Naive thymus-derived CD4-positive, alpha-beta T cell (primary cell): ENCODE measurements at regions of chr11 and their contacts with region 1.

Region 1: DNA sequence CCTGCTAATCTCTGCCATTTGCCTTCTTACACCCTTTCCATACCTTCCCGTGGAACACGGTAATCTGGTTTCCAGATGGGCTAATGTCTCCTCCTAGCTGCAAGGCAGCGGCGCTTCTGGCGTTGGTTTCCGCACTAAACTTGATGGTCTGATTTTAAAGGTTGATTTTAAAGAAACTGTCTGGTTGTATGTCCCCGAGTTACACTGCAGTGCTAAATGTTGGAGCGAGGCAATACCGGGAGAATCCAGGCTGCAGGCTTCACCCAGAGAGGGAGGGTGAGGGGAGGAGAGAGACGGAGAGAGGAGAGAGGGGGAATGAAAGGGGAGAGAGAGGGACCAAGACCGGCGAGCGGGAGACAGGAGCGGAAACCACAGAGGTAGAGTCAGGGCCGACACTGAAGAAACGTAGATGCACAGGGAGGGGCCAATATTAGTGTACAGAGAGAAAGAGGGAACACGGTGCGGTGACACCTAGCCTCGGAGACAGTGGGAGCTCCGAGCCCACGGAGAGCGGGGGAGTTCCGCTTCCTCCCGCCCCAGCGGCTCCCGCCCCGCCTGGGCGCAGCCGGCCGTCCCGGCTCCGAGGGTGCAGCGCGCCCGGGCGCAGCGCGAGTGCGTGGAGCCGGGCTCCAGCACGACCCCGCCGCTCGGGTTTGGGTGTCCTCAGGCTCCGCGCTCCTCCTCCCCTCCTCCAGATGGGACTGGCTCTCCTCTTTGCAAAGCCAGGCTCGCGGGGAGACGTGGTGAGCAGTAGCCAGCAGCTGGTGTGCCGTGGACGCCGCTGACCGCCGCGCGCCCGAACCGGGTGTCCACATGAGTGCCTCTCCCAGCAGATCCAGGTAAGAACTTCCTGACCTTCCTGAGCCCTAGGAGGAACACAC is 71.9 kb upstream of the GRAMD1B start:
- DNase-seq: peak in 1 of 9 donors; percentile 64
- ATAC-seq: peak; percentile 59
- H3K4me3 ChIP-seq: peak overlapping the region; percentile 56
- H3K4me3 Mint-ChIP-seq: peak overlapping the region; percentile 4 to 98 (median 72)
- H3K27ac ChIP-seq: no peak overlapping the region
- H3K27ac Mint-ChIP-seq: peak overlapping the region in 1 of 9 donors; percentile 92
- H3K4me1 ChIP-seq: peaks cover 0 to 16% of the 10 kb centered on the region in 2 donors
- H3K4me1 Mint-ChIP-seq: peaks cover 8 to 61% (median 15%) of the 10 kb centered on the region in 7 donors
- H3K27me3 ChIP-seq: peaks cover 0 to 2% of the 10 kb centered on the region in 2 donors
- H3K27me3 Mint-ChIP-seq: peaks cover 0 to 55% (median 46%) of the 10 kb centered on the region in 5 donors

Region 2: DNA sequence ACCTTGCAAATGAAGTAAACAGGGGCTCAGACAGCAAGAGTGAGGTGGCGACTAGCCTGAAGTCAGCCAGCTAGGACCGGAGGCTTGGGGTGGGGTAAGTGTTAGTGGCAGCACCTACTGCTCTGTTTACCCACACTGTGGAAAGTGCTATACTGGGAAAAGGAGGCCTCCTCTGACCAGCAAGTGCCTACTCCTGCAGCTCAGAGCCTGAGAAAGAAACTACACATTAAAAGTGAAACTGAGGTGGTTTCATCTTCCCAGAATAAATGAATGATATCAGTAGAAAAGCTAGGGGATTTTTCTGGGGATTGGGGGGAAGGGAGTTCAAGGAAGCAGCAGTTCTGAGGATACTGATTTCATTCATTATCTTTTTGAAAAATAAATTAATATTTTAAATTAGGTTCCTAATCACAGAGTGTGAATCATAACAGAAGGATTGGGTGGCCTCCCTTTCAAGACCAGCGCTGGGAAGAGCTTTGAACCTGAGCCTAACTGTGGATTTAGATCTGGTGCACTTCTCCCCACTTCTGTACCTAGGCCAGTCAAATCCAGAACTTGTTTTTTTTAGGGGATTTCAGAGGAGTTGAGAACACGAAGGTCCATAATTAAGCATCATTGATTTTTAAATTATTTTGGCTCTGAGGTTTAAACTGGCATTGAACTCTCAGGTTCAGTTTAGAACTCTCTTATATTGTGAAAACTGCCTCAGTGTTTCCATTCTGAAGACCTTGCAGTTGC is 23.8 kb after region 1 on chr11:
- CTCF ChIA-PET with region 1: no interaction called
- POLR2A ChIA-PET with region 1: no interaction called
- intact Hi-C with region 1: loop called in 1 of 2 experiments (anchors 1 kb)
- DNase-seq: peak in 1 of 9 donors; percentile 65
- ATAC-seq: peak; percentile 45
- H3K4me3 ChIP-seq: no peak overlapping the region
- H3K4me3 Mint-ChIP-seq: peak overlapping the region in 1 of 10 donors; percentile 77
- H3K27ac ChIP-seq: no peak overlapping the region
- H3K27ac Mint-ChIP-seq: peak overlapping the region in 1 of 9 donors; percentile 86
- H3K4me1 ChIP-seq: peaks cover 0 to 6% of the 10 kb centered on the region in 2 donors
- H3K4me1 Mint-ChIP-seq: peaks cover 0 to 48% (median 3%) of the 10 kb centered on the region in 7 donors
- H3K27me3 ChIP-seq: peaks cover 0 to 3% of the 10 kb centered on the region in 2 donors
- H3K27me3 Mint-ChIP-seq: no peaks in the 10 kb centered on the region

Region 3: GRCh38 chr11:123478352-123478987 is 120.3 kb after region 1 on chr11:
- CTCF ChIA-PET with region 1: interaction called, 5 read pairs
- POLR2A ChIA-PET with region 1: no interaction called
- intact Hi-C with region 1: loop called in 1 of 2 experiments (anchors 2 kb)
- DNase-seq: peak in 7 of 9 donors; percentile 27 to 61 (median 50)
- ATAC-seq: peak; percentile 64
- H3K4me3 ChIP-seq: no peak overlapping the region
- H3K4me3 Mint-ChIP-seq: peak overlapping the region in 1 of 10 donors; percentile 39
- H3K27ac ChIP-seq: no peak overlapping the region
- H3K27ac Mint-ChIP-seq: peak overlapping the region in 1 of 9 donors; percentile 30
- H3K4me1 ChIP-seq: no peaks in the 10 kb centered on the region
- H3K4me1 Mint-ChIP-seq: peaks cover 0 to 59% (median 5%) of the 10 kb centered on the region in 7 donors
- H3K27me3 ChIP-seq: no peaks in the 10 kb centered on the region
- H3K27me3 Mint-ChIP-seq: no peaks in the 10 kb centered on the region

Region 4: DNA sequence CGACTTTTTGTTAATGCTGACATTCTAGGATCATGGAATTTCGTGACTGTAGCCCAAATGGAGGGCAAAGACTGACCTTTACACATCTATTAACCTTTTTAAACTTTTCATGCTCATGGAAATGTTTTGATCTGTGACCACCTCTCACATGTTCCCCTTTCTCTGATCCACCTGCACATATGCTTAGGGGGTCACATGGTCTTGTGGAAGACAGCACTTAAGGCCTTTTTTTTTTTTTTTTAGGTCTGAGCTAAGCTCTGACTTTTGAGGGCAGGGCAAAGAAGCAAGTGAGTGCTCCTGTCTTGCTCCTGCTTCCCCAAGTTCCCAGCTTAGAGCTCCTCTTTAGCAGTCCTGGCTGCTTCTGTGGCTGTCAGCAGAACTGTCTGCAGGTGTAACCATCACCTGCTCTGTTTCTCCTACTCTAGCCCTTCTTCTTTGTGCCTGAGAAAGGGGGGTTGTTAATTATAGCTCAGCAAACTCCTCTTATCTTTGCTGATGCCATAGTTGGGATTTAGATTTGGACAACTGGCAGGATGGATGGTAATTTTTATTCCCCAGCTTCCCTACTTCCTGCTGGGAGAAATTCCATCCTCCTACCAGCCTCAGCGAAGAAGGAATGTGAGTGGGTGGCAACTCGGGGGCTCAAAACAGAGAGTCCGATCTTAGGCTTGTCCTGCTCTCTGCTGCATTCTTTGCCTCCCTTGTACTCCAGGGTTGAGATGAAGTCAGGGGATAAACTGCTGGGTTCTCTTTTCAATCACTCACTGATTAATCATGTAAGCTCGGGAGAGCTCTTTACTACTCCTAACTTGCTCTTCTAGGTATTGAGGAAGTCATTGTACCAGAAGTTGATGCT is 136.2 kb after region 1 on chr11:
- CTCF ChIA-PET with region 1: no interaction called
- POLR2A ChIA-PET with region 1: no interaction called
- intact Hi-C with region 1: no loop called
- DNase-seq: no peak
- ATAC-seq: no peak
- H3K4me3 ChIP-seq: no peak overlapping the region
- H3K4me3 Mint-ChIP-seq: no peak overlapping the region
- H3K27ac ChIP-seq: no peak overlapping the region
- H3K27ac Mint-ChIP-seq: peak overlapping the region in 1 of 9 donors; percentile 11
- H3K4me1 ChIP-seq: no peaks in the 10 kb centered on the region
- H3K4me1 Mint-ChIP-seq: peaks cover 0 to 41% (median 3%) of the 10 kb centered on the region in 7 donors
- H3K27me3 ChIP-seq: no peaks in the 10 kb centered on the region
- H3K27me3 Mint-ChIP-seq: no peaks in the 10 kb centered on the region

Region 5: GRCh38 chr11:123536690-123537437 is 178.7 kb after region 1 on chr11:
- CTCF ChIA-PET with region 1: no interaction called
- POLR2A ChIA-PET with region 1: no interaction called
- intact Hi-C with region 1: no loop called
- DNase-seq: no peak
- ATAC-seq: no peak
- H3K4me3 ChIP-seq: no peak overlapping the region
- H3K4me3 Mint-ChIP-seq: no peak overlapping the region
- H3K27ac ChIP-seq: no peak overlapping the region
- H3K27ac Mint-ChIP-seq: no peak overlapping the region
- H3K4me1 ChIP-seq: no peaks in the 10 kb centered on the region
- H3K4me1 Mint-ChIP-seq: peaks cover 0 to 37% (median 0%) of the 10 kb centered on the region in 7 donors
- H3K27me3 ChIP-seq: no peaks in the 10 kb centered on the region
- H3K27me3 Mint-ChIP-seq: no peaks in the 10 kb centered on the region

Region 6: DNA sequence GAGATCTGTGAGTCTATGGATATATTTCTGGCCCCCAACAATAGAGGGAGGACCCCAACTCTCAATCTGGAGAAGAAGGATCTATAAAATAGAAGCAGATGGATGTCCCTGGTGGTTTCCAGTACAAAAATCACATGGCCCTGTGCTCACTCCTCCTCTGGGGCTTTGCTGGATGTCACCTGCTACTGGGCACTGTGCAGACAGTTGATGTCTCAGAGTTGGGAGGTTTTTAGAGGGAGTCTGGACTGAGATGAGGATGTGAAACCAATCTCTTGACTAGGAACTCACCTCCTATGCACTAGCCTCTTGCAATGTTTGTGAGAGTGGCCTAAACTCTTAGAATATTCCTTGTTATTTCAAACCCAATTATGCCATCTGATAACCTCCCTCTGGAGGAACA is 189.0 kb after region 1 on chr11:
- CTCF ChIA-PET with region 1: no interaction called
- POLR2A ChIA-PET with region 1: no interaction called
- intact Hi-C with region 1: no loop called
- DNase-seq: no peak
- ATAC-seq: peak; percentile 64
- H3K4me3 ChIP-seq: no peak overlapping the region
- H3K4me3 Mint-ChIP-seq: no peak overlapping the region
- H3K27ac ChIP-seq: no peak overlapping the region
- H3K27ac Mint-ChIP-seq: no peak overlapping the region
- H3K4me1 ChIP-seq: no peaks in the 10 kb centered on the region
- H3K4me1 Mint-ChIP-seq: peaks cover 0 to 36% (median 0%) of the 10 kb centered on the region in 7 donors
- H3K27me3 ChIP-seq: no peaks in the 10 kb centered on the region
- H3K27me3 Mint-ChIP-seq: no peaks in the 10 kb centered on the region

Region 7: DNA sequence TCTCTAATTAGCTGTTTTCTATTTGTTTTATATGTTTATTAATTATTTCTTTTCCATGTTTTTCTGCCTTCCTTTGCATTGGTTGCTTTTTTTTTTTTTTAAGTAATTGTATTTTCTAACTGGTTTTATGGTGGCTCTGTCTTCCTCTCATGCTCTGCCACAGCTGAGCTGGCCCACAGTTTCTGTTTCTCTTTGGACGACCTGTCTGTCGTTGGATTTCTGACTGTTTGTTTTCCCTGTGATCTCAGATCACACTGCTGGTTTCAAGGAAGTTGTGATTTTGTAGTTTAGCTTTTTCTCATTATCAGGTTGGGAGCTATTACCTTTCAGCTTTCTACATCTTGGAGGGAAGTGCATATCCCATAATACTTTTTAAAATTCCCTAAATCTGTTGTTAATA is 463.8 kb after region 1 on chr11:
- CTCF ChIA-PET with region 1: no interaction called
- POLR2A ChIA-PET with region 1: no interaction called
- intact Hi-C with region 1: no loop called
- DNase-seq: peak in 2 of 9 donors; percentile 24 to 29
- ATAC-seq: no peak
- H3K4me3 ChIP-seq: peak overlapping the region; percentile 3
- H3K4me3 Mint-ChIP-seq: peak overlapping the region in 1 of 10 donors; percentile 60
- H3K27ac ChIP-seq: no peak overlapping the region
- H3K27ac Mint-ChIP-seq: peak overlapping the region in 1 of 9 donors; percentile 11
- H3K4me1 ChIP-seq: no peaks in the 10 kb centered on the region
- H3K4me1 Mint-ChIP-seq: peaks cover 0 to 16% (median 0%) of the 10 kb centered on the region in 7 donors
- H3K27me3 ChIP-seq: no peaks in the 10 kb centered on the region
- H3K27me3 Mint-ChIP-seq: peaks cover 0 to 24% (median 14%) of the 10 kb centered on the region in 5 donors